ENCODE measurements at regions of chr16 and their contacts with region 1.

Region 1: GRCh38 chr16:48609652-48610029 is 339 bp downstream of the N4BP1 start:
- DNase-seq: peak; percentile 83
- H3K4me3 ChIP-seq: peak overlapping the region; percentile 84
- H3K27ac ChIP-seq: peak overlapping the region; percentile 95
- H3K4me1 ChIP-seq: peaks cover 37% of the 10 kb centered on the region
- H3K27me3 ChIP-seq: no peaks in the 10 kb centered on the region

Region 2: DNA sequence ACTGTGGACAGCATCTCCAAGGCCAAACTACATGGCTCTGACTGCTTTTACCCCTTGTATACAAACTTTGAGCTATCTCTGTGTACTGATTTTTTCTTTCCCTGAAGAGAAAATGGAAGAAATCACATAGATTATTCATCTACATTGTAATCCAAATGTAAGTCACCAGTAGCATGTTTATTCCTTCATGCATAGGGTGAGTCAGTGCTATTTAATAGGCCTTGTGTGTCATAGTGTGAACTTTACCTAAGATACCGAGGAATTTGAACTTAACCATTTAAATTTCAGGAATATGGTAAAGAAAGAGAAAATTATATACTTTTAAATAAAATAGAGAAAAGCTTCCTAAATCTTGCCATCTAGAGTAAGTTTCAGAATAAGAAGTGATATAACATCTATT is 1132.0 kb before region 1 on chr16:
- in situ Hi-C with region 1: no loop called
- DNase-seq: peak; percentile 71
- H3K4me3 ChIP-seq: no peak overlapping the region
- H3K27ac ChIP-seq: no peak overlapping the region; the same call in 1 of the 2 replicates
- H3K4me1 ChIP-seq: peaks cover 15% of the 10 kb centered on the region
- H3K27me3 ChIP-seq: no peaks in the 10 kb centered on the region

Region 3: GRCh38 chr16:48353565-48354163 is 256.0 kb before region 1 on chr16:
- in situ Hi-C with region 1: loop called (anchors 10 kb)
- DNase-seq: peak; percentile 89
- H3K4me3 ChIP-seq: no peak overlapping the region
- H3K27ac ChIP-seq: no peak overlapping the region
- H3K4me1 ChIP-seq: no peaks in the 10 kb centered on the region
- H3K27me3 ChIP-seq: no peaks in the 10 kb centered on the region

Region 4: DNA sequence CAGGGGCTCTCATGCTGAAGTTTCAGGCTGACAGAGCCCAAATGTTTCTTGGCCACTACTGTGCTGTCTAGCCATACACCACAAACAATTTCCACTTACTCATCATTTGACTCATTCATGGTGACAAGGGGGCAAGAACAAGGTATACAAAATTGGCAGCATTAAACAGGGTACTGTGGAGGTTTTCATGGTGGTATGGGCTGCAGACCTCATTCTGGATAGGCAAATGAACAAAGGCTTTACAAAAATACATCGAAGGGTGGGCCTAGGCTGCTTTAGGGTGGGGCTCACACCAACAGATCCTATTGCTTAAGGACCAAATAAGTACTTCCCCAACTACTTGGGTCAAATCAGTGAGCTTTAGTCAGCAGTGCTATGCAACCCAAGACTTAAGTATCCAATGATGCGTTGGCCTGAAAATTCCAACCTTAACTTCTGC is 52.7 kb before region 1 on chr16:
- in situ Hi-C with region 1: no loop called
- DNase-seq: peak; percentile 88
- H3K4me3 ChIP-seq: no peak overlapping the region
- H3K27ac ChIP-seq: peak overlapping the region; percentile 68
- H3K4me1 ChIP-seq: peaks cover 44% of the 10 kb centered on the region
- H3K27me3 ChIP-seq: no peaks in the 10 kb centered on the region